ENCODE measurements at regions of chr14 and their contacts with region 1.

Region 1: GRCh38 chr14:59055439-59056045 is 132.9 kb upstream of the DAAM1 start:
- DNase-seq: no peak
- ATAC-seq: peak; percentile 81

Region 2: GRCh38 chr14:58501214-58501816 is 554.2 kb before region 1 on chr14:
- intact Hi-C with region 1: loop called (anchors 5 kb)
- DNase-seq: no peak
- ATAC-seq: peak; percentile 68

Region 3: GRCh38 chr14:58637391-58638230 is 417.9 kb before region 1 on chr14 and contains the start of gene DACT1:
- intact Hi-C with region 1: loop called (anchors 10 kb)
- DNase-seq: peak; percentile 86
- ATAC-seq: peak; percentile 83
- total RNA-seq, gene DACT1: 115 TPM

Region 4: GRCh38 chr14:59126710-59127432 is 71.3 kb after region 1 on chr14:
- intact Hi-C with region 1: no loop called
- DNase-seq: no peak
- ATAC-seq: peak; percentile 90